Esophagus muscularis mucosa (tissue), 4 donors: ENCODE measurements at regions of chr22 and their contacts with region 1.

Region 1: GRCh38 chr22:31148953-31149627 is 8.8 kb upstream of the PLA2G3 start:
- DNase-seq: no peak
- H3K4me3 ChIP-seq: no peak overlapping the region
- H3K27ac ChIP-seq: peak overlapping the region; percentile 64 to 82 (median 74)
- H3K4me1 ChIP-seq: peaks cover 9 to 27% (median 21%) of the 10 kb centered on the region in 4 donors
- H3K27me3 ChIP-seq: no peaks in the 10 kb centered on the region
- CTCF ChIP-seq: peak in 2 of 3 experiments; percentile 89 to 98
- EP300 ChIP-seq: no peak
- POLR2A ChIP-seq: no peak

Region 2: GRCh38 chr22:30763815-30764686 is 385.0 kb before region 1 on chr22:
- intact Hi-C with region 1: loop called (anchors 10 kb)
- DNase-seq: no peak
- H3K4me3 ChIP-seq: no peak overlapping the region
- H3K27ac ChIP-seq: no peak overlapping the region
- H3K4me1 ChIP-seq: no peaks in the 10 kb centered on the region
- H3K27me3 ChIP-seq: no peaks in the 10 kb centered on the region
- CTCF ChIP-seq: peak; percentile 40 to 54 (median 51)
- EP300 ChIP-seq: no peak
- POLR2A ChIP-seq: no peak

Region 3: GRCh38 chr22:30947816-30948454 is 201.2 kb before region 1 on chr22:
- intact Hi-C with region 1: loop called (anchors 2 kb)
- DNase-seq: peak; percentile 14
- H3K4me3 ChIP-seq: no peak overlapping the region
- H3K27ac ChIP-seq: peak overlapping the region; percentile 69 to 83 (median 78)
- H3K4me1 ChIP-seq: peaks cover 21 to 46% (median 33%) of the 10 kb centered on the region in 4 donors
- H3K27me3 ChIP-seq: no peaks in the 10 kb centered on the region
- CTCF ChIP-seq: peak; percentile 65 to 73 (median 66)
- EP300 ChIP-seq: no peak
- POLR2A ChIP-seq: no peak

Region 4: DNA sequence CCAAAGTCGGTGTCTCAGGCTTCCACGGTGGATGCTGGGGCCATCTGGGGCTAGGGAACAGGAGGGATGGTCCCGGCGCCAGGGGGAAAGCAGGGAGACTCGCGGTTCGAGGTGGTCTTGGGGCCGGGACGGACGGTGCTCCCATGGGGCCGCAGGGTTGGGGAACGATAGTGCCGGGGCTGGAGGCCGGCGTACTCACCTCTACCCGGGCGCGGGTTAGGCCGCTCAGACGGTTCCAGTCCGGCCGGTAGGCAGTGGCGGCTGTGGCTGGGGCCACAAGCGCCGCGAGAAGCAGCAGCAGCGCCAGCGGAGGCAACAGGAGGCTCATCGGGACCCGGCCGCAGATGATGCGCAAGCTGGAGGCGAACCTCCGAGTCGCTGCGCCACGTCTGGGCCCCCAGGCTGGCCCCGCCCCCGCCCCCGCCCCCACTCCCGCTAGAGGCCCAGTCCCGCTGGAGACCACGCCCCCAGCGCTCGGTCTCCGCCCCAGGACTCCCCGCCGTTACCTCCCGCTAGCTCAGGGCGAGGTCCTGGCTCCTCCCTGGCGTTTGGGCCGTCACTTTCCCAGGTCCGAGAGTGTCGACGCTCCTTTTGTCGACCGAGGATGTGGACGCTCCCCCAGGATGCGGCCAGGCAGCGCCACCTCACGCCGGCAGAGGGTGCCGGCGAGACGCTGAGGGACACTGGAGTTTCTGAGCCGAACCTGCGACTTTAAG is 41.8 kb before region 1 on chr22 and contains the start of gene SELENOM:
- intact Hi-C with region 1: loop called (anchors 5 kb)
- DNase-seq: peak; percentile 99
- H3K4me3 ChIP-seq: peak within 1 kb of the TSS; percentile 90 to 95 (median 91)
- H3K27ac ChIP-seq: peak within 1 kb of the TSS; percentile 98 to 99 (median 99)
- H3K4me1 ChIP-seq: peaks cover 47 to 54% (median 52%) of the 10 kb centered on the region in 4 donors
- H3K27me3 ChIP-seq: no peaks in the 10 kb centered on the region
- CTCF ChIP-seq: peak; percentile 95 to 99 (median 97)
- EP300 ChIP-seq: no peak
- POLR2A ChIP-seq: peak; percentile 83
- total RNA-seq, gene SELENOM: 1,118 to 1,733 (median 1,416) TPM